ENCODE measurements at regions of chr12 and their contacts with region 1.

Region 1: DNA sequence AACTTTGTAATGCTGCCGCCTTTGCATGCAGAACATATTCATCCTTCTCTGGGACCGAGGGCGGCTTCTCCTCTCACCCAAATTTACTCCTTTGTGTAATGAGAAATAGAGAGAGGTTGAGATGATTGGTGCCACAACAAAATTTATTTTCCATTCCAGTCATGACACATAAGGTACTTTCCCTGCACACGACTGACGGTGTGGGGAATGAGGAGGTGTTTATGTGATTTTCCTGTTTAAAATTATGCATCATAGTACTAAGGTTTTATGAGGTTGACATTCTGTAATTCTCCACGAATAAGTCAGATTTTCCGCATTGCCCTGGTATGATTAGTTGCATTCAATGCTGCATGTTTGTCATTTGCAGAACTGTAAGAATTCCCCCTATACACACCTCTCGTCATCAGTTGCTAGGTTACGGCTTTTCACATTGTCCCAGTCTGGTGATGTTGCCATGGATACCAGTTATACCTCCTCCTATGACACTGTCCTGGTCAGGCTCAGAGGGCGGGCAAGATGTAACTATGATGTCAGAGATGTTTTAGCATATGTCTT is 23.1 kb downstream of the BICDL1 start:
- DNase-seq: peak; percentile 6
- H3K4me3 ChIP-seq: no peak overlapping the region
- H3K27ac ChIP-seq: no peak overlapping the region
- H3K4me1 ChIP-seq: peaks cover 13% of the 10 kb centered on the region
- CTCF ChIP-seq: no peak

Region 2: GRCh38 chr12:120079411-120080026 is 67.4 kb after region 1 on chr12:
- CTCF ChIA-PET with region 1: no interaction called
- POLR2A ChIA-PET with region 1: no interaction called
- intact Hi-C with region 1: loop called (anchors 2 kb)
- DNase-seq: no peak
- H3K4me3 ChIP-seq: no peak overlapping the region
- H3K27ac ChIP-seq: no peak overlapping the region
- H3K4me1 ChIP-seq: no peaks in the 10 kb centered on the region
- CTCF ChIP-seq: no peak

Measured in OCI-LY7 (cell line).